ENCODE measurements at regions of chr10 and their contacts with region 1.

Region 1: GRCh38 chr10:118241229-118242137 is 100.6 kb downstream of the FAM204A start:
- DNase-seq: peak; percentile 95
- H3K4me3 ChIP-seq: no peak overlapping the region
- H3K27ac ChIP-seq: no peak overlapping the region
- H3K4me1 ChIP-seq: peaks cover 0 to 7% (median 3%) of the 10 kb centered on the region in 4 donors
- H3K27me3 ChIP-seq: peaks cover 0 to 73% (median 10%) of the 10 kb centered on the region in 4 donors
- CTCF ChIP-seq: peak; percentile 86 to 94 (median 93)
- EP300 ChIP-seq: no peak
- POLR2A ChIP-seq: no peak

Region 2: GRCh38 chr10:117537436-117537903 is 704.0 kb before region 1 on chr10:
- intact Hi-C with region 1: loop called (anchors 5 kb)
- DNase-seq: no peak
- H3K4me3 ChIP-seq: peak overlapping the region in 3 of 4 donors; percentile 20 to 37 (median 23)
- H3K27ac ChIP-seq: no peak overlapping the region
- H3K4me1 ChIP-seq: peaks cover 28 to 63% (median 56%) of the 10 kb centered on the region in 4 donors
- H3K27me3 ChIP-seq: peaks cover 0 to 100% (median 80%) of the 10 kb centered on the region in 4 donors
- CTCF ChIP-seq: peak; percentile 60 to 67 (median 63)
- EP300 ChIP-seq: no peak
- POLR2A ChIP-seq: no peak

Region 3: GRCh38 chr10:118106426-118106825 is 135.1 kb before region 1 on chr10:
- intact Hi-C with region 1: loop called (anchors 5 kb)
- DNase-seq: no peak
- H3K4me3 ChIP-seq: no peak overlapping the region
- H3K27ac ChIP-seq: no peak overlapping the region
- H3K4me1 ChIP-seq: no peaks in the 10 kb centered on the region
- H3K27me3 ChIP-seq: no peaks in the 10 kb centered on the region
- CTCF ChIP-seq: peak in 1 of 3 experiments; percentile 23
- EP300 ChIP-seq: no peak
- POLR2A ChIP-seq: no peak

Measured in esophagus muscularis mucosa (tissue), 4 donors.